ENCODE measurements at regions of chr4 and their contacts with region 1.

Region 1: DNA sequence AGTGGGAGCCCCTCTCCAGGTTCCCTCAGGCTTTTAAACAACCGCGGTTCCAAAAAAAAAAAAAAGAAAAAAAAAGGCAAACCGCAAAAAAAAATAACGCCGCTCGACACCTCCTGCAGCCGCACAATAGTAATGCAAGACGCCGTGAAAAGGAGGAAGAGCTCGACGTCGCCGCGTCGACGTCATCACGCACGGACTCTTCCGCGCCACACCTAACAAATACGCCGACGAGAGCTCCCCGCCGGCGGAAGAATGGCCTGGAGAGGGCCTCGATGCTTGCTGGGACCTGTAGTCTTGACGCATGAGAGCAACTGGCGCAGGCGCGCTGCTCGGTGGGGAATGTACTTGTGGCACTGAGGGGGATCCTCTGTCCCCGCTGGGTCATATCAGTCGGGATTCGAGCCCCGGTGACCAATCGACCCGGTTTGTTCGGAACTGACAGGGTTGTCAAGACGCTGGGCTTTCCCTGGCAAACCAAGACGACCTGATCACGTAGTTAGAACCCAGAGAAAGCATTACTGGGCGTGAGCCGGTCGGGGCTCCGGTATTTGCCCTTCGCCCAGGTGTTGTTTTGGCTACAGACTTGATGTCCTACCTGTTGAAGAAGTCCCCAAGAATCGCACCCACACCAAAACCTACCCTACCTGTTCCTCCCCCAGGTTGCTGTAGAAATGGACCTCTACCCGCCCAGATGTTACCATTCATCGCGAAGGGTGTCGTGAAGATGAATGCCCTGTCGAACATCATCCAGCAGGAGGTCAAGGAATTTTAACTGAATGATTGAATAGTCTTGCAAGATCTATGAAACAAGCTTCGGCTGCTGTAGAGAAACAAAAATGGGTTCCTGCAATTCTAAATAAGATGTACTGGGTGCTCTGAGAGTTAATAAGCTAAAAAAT is at the start of gene CBR4:
- DNase-seq: peak; percentile 94
- H3K4me3 Mint-ChIP-seq: peak within 1 kb of the TSS; percentile 93
- H3K27ac Mint-ChIP-seq: peak within 1 kb of the TSS; percentile 96
- H3K4me1 Mint-ChIP-seq: peaks cover 46% of the 10 kb centered on the region
- H3K27me3 Mint-ChIP-seq: peaks cover 6% of the 10 kb centered on the region
- total RNA-seq, gene CBR4: 18.9 and 20.9 TPM in 2 replicates

Region 2: GRCh38 chr4:168318266-168318895 is 692.0 kb before region 1 on chr4 and contains the start of gene DDX60:
- intact Hi-C with region 1: loop called (anchors 1 kb)
- DNase-seq: peak; percentile 85
- H3K4me3 Mint-ChIP-seq: peak within 1 kb of the TSS; percentile 90
- H3K27ac Mint-ChIP-seq: peak within 1 kb of the TSS; percentile 88
- H3K4me1 Mint-ChIP-seq: peaks cover 60% of the 10 kb centered on the region
- H3K27me3 Mint-ChIP-seq: peaks cover 1% of the 10 kb centered on the region
- total RNA-seq, gene DDX60: 10.6 and 15.2 TPM in 2 replicates

Region 3: DNA sequence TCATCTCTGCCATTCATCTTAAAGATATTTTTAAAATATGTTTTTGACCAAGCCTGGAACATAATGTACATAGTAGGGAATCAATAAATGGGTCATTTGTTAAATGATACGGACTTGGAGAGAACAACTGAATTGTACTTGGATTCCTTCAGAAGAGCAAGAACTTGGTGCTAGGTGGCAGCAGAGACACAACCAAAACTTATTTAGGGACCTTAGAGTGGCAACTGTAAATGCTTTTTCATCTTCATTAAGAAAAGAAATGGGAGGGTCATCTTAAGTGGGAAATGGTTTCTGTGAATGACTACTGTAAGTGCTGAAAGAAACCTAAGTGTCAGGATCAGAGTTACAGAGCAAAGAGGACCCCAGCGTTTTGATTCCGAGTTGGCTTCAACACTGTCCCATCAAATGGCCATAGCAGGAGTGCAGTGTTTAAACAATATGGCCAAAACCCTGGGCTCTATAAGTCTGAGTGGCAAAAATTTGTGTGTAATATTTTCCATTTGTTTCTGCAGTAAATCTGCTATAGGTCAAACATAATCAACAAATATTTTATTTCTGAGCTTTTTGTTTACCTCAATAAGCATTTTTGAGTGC is 299.9 kb before region 1 on chr4:
- intact Hi-C with region 1: loop called (anchors 10 kb)
- DNase-seq: no peak
- H3K4me3 Mint-ChIP-seq: no peak overlapping the region
- H3K27ac Mint-ChIP-seq: no peak overlapping the region
- H3K4me1 Mint-ChIP-seq: peaks cover 13% of the 10 kb centered on the region
- H3K27me3 Mint-ChIP-seq: peaks cover 4% of the 10 kb centered on the region

Region 4: DNA sequence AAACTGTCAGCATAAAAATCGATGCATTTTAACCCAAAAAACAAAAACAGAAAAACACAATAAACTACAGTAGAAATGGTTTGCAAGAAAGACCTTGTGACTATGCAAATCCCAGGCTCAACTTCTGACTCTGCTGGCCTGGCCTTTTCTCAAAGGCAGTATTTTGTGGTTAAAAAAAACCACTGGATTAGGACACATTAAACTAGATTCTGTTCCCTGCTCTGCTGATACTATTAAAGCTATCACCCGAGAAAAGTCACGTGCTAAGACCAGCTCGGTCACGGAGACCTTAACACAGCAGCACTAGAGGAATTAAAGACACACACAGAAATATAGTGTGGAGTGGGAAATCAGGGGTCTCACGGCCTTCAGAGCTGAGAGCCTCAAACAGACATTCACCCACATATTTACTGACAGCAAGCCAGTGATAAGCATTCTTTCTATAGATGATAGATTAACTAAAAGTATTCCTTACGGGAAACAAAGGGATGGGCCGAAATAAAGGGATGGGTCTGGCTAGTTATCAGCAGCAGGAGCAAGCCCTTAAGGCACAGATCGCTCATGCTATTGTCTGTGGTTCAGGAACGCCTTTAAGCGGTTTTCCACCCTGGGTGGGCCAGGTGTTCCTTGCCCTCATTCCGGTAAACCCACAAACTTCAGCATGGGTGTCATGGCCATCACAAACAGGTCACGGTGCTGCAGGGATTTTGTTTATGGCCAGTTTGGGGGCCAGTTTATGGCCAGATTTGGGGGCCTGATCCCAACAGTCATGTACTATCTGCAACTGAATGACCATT is 16.5 kb before region 1 on chr4:
- intact Hi-C with region 1: loop called (anchors 2 kb)
- DNase-seq: no peak
- H3K4me3 Mint-ChIP-seq: no peak overlapping the region
- H3K27ac Mint-ChIP-seq: no peak overlapping the region
- H3K4me1 Mint-ChIP-seq: no peaks in the 10 kb centered on the region
- H3K27me3 Mint-ChIP-seq: no peaks in the 10 kb centered on the region

Region 5: GRCh38 chr4:169225058-169225751 is 214.8 kb after region 1 on chr4:
- intact Hi-C with region 1: no loop called
- DNase-seq: no peak
- H3K4me3 Mint-ChIP-seq: no peak overlapping the region
- H3K27ac Mint-ChIP-seq: no peak overlapping the region
- H3K4me1 Mint-ChIP-seq: no peaks in the 10 kb centered on the region
- H3K27me3 Mint-ChIP-seq: peaks cover 2% of the 10 kb centered on the region

Region 6: DNA sequence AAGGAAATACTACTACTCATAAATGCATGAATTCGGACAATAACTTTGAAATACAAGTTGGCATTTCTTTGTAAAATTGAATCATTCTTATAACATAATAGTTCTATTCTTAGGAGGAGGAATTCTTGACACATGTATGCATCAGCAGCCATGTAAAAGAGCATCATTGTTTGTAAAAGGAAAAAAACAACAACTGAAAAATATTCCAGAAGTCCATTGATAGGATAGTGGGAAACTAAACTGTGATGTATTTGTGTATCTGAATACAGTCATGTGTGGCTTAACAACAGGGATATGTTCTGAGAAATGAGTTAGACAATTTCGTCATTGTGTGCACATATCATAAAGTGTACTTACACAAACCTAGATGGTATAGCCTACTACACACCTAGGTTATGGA is 362.4 kb after region 1 on chr4:
- intact Hi-C with region 1: no loop called
- DNase-seq: no peak
- H3K4me3 Mint-ChIP-seq: no peak overlapping the region
- H3K27ac Mint-ChIP-seq: no peak overlapping the region
- H3K4me1 Mint-ChIP-seq: no peaks in the 10 kb centered on the region
- H3K27me3 Mint-ChIP-seq: no peaks in the 10 kb centered on the region

Region 7: DNA sequence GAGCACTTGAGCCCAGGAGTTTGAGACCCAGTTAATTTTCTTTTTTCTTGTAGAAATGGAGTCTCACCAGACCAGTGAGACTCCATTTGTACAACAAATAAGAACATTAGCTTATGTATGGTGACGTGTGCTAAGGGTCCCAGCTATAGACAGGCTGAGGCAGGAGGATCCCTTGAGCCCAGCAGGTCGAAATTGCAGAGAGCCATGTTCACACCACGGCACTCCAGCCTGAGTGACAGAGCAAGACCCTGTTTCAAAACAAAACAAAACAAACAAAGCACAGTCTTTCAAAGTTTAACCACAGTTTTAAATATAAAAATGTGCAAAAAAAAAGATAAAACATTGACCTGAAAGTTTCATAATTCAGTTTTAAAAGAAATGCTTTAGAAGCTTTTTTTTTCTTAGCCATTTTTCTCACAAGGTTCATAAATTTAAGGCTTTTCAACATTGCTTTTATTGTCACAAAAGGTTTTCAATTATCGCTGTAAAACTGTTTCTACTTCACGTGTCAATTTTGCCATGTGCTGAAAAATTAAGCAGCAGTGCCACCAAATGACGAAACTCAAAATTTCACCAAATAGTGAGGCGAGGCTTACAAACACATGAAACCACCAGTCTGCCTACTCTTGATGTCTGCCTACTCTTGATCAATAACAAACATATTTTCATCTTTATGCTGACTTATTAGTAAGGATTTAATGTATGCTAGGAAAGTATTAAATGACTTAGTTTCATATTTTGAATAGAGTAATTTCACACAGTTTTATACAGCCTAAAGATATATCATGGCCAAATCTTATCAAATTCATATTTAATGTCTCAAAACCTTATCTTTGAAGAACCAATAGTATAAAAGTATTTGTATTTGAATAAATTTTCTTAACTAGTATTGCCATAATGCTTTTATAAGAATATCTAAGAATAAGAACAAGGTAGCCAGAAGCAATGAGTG is 475.7 kb after region 1 on chr4:
- intact Hi-C with region 1: loop called (anchors 2 kb)
- DNase-seq: peak; percentile 5
- H3K4me3 Mint-ChIP-seq: no peak overlapping the region
- H3K27ac Mint-ChIP-seq: no peak overlapping the region
- H3K4me1 Mint-ChIP-seq: no peaks in the 10 kb centered on the region
- H3K27me3 Mint-ChIP-seq: no peaks in the 10 kb centered on the region

Region 8: DNA sequence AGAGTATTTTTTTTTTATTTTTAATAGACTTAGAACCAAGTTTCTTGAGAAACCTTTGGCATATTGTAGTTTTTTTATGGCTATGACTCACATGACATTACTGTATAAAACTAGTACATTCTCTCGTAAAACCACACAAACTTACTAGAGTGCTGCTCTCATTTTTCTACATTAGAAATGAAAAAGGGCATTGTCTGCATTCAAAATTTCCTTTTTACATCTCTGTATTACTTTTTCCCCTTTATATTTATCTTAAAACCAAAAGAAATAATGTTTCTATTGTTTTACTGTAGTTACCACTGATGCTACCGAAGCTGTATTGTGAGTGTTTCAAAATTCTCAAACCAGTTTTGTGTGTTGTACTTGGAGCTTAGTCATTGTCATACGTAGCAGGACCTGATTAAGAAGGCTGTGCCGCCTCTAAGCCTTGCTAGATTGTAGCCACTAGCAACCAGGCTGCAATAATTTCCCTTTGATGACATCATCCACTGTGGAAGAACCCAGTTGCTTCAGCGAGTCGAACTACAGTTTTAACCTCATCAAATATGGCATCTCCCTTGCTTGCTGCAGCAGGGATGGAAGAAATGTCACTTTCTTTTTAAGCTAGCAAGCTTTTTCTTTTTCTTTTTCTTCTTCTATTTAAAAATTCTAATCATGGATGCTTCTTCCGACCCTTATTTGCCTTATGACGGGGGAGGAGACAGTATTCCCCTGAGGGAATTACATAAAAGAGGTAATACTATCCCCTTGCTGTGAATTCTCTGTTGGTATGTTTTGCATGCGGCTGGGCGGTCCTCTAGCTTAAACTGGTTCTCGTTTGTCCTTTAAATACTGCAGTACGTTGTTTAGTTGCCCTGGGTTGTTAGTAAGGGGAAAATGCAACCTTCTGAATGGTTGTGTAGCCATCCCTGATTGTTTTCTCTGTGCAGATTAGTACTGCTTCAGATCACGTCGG is 649.6 kb after region 1 on chr4:
- intact Hi-C with region 1: loop called (anchors 1 kb)
- DNase-seq: peak; percentile 70
- H3K4me3 Mint-ChIP-seq: peak overlapping the region; percentile 86
- H3K27ac Mint-ChIP-seq: peak overlapping the region; percentile 97
- H3K4me1 Mint-ChIP-seq: peaks cover 26% of the 10 kb centered on the region
- H3K27me3 Mint-ChIP-seq: no peaks in the 10 kb centered on the region